Activated CD4-positive, alpha-beta T cell treated with anti-CD3 and anti-CD28 coated beads for 36 hours (primary cell): ENCODE measurements at regions of chr6 and their contacts with region 1.

Region 1: DNA sequence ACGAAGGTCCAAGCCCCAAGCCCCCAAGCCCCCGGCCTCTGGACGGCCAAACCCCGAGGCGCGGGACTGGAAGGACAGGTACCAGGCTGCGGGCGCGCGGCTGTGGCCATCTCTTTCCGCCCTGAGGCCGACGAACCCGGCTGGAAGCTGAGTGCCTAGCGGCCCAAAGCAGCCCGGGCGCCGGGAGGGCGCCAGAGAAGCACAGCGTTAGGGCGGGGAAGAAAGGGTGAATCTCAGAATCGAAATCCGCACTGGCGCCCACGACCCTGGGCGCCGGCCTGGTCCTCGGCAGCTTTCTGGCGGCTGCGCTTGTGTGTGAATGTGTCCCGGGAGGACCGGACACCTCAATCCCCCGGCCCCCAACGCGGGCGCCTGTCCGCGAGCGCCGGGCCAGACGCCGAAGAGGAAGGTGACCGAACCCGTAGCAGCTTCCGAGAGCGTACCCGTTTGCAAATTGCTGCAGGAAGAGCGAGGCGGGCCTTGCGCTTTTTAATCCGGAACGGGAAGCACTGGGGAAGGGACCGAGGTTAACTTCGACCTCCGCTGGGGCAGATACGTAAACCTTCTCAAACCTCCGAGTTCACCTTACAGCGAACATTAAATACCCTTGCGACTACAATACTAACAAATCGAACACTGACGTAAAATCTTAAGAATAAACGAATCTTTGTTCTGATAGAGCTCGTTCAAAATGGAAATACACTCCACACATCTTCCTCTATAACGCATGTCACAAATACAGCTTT is 2.9 kb downstream of the NRN1 start:
- DNase-seq: peak; percentile 62
- ATAC-seq: no peak
- H3K4me3 Mint-ChIP-seq: peak overlapping the region; percentile 72
- H3K27ac Mint-ChIP-seq: peak overlapping the region; percentile 70
- H3K4me1 Mint-ChIP-seq: peaks cover 64% of the 10 kb centered on the region
- H3K27me3 Mint-ChIP-seq: peaks cover 74% of the 10 kb centered on the region

Region 2: GRCh38 chr6:5085193-5085647 is 918.6 kb before region 1 on chr6 and contains the start of gene PPP1R3G:
- CTCF ChIA-PET with region 1: no interaction called
- POLR2A ChIA-PET with region 1: no interaction called
- intact Hi-C with region 1: loop called in 1 of 2 experiments (anchors 5 kb)
- DNase-seq: peak; percentile 37
- ATAC-seq: peak; percentile 15
- H3K4me3 Mint-ChIP-seq: peak within 1 kb of the TSS; percentile 69
- H3K27ac Mint-ChIP-seq: no peak within 1 kb of the TSS
- H3K4me1 Mint-ChIP-seq: peaks cover 7% of the 10 kb centered on the region
- H3K27me3 Mint-ChIP-seq: peaks cover 39% of the 10 kb centered on the region
- total RNA-seq, gene PPP1R3G: 0.09 to 0.11 TPM

Region 3: DNA sequence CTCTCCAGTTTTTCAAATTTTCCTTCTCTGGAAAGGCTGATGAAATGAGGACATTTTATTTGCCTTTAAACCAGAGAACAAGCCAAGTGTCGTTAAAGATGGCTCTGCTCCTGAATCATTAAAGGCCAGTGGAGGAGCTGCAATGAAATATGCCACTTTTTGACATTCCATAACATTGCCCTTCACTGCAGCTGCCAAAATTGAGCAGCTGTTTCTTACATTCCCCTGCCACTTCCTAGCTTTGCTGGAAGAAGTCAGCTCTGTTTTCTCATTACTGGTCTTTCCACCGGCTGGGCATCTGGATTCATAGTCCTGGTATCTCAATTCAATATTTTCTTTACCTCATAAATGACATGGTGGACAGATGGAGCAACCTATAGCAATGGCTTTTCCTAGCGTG is 48.4 kb after region 1 on chr6:
- CTCF ChIA-PET with region 1: no interaction called
- POLR2A ChIA-PET with region 1: no interaction called
- intact Hi-C with region 1: no loop called
- DNase-seq: no peak
- ATAC-seq: no peak
- H3K4me3 Mint-ChIP-seq: no peak overlapping the region
- H3K27ac Mint-ChIP-seq: no peak overlapping the region
- H3K4me1 Mint-ChIP-seq: no peaks in the 10 kb centered on the region
- H3K27me3 Mint-ChIP-seq: peaks cover 25% of the 10 kb centered on the region